Naive thymus-derived CD4-positive, alpha-beta T cell (primary cell): ENCODE measurements at regions of chr9 and their contacts with region 1.

Region 1: DNA sequence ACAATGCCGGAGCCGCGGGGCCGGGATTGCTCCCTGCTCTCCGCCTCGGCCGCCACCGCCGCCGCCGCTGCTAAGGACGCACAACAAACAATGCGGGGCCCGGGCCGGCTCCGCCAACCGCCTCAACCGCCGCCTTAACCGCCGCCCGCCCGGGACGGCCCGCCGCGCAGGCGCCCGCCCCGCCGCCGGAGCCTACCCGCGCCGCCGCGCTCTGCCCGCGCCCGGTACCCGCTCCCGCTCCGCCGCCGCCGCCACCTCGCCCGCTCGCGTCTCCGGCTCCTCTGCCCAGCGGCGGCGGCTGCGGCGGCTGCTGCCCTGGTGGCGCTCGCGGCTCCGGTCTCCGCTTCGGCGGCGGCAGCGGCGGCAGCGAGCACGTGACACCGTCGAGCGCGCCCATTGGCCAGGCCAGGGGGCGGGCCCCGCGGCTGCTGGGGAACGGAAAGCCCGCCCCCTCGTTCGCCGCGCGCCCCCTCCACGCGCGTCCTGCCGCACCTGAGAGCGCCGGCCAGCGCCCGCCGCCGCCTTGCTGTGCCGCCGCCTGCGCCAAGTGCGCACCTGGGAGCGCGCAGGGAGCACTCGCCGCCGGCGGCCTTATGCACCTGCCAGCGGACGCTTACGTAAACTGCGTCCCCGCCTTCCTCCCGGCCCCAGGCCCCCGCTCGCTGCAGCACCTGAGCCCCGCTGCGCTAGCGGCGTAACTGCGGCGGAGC is at the start of gene STRBP:
- DNase-seq: peak; percentile 90 to 98 (median 96)
- ATAC-seq: peak; percentile 96
- H3K4me3 ChIP-seq: peak within 1 kb of the TSS; percentile 76
- H3K4me3 Mint-ChIP-seq: peak within 1 kb of the TSS; percentile 72 to 97 (median 83)
- H3K27ac ChIP-seq: peak within 1 kb of the TSS; percentile 78
- H3K27ac Mint-ChIP-seq: peak within 1 kb of the TSS; percentile 37 to 90 (median 74)
- H3K4me1 ChIP-seq: peaks cover 3 to 12% of the 10 kb centered on the region in 2 donors
- H3K4me1 Mint-ChIP-seq: peaks cover 26 to 45% (median 40%) of the 10 kb centered on the region in 7 donors
- H3K27me3 ChIP-seq: no peaks in the 10 kb centered on the region
- H3K27me3 Mint-ChIP-seq: peaks cover 0 to 9% (median 0%) of the 10 kb centered on the region in 5 donors
- total RNA-seq, gene STRBP: 14.5 to 28.8 (median 17.5) TPM

Region 2: GRCh38 chr9:122264360-122265148 is 1003.8 kb before region 1 on chr9 and contains the starts of genes MRRF and RBM18:
- CTCF ChIA-PET with region 1: no interaction called
- POLR2A ChIA-PET with region 1: no interaction called
- intact Hi-C with region 1: loop called in 1 of 2 experiments (anchors 5 kb)
- DNase-seq: peak; percentile 80 to 93 (median 88)
- ATAC-seq: peak; percentile 92
- H3K4me3 ChIP-seq: peak within 1 kb of the TSS; percentile 93
- H3K4me3 Mint-ChIP-seq: peak within 1 kb of the TSS; percentile 88 to 100 (median 98)
- H3K27ac ChIP-seq: peak within 1 kb of the TSS; percentile 94
- H3K27ac Mint-ChIP-seq: peak within 1 kb of the TSS; percentile 76 to 100 (median 99)
- H3K4me1 ChIP-seq: peaks cover 18 to 25% of the 10 kb centered on the region in 2 donors
- H3K4me1 Mint-ChIP-seq: peaks cover 40 to 71% (median 61%) of the 10 kb centered on the region in 7 donors
- H3K27me3 ChIP-seq: no peaks in the 10 kb centered on the region
- H3K27me3 Mint-ChIP-seq: peaks cover 0 to 2% (median 0%) of the 10 kb centered on the region in 5 donors
- total RNA-seq, gene MRRF: 28.1 to 35.8 (median 33.3) TPM
- total RNA-seq, gene RBM18: 14.2 to 22.9 (median 15.8) TPM

Region 3: DNA sequence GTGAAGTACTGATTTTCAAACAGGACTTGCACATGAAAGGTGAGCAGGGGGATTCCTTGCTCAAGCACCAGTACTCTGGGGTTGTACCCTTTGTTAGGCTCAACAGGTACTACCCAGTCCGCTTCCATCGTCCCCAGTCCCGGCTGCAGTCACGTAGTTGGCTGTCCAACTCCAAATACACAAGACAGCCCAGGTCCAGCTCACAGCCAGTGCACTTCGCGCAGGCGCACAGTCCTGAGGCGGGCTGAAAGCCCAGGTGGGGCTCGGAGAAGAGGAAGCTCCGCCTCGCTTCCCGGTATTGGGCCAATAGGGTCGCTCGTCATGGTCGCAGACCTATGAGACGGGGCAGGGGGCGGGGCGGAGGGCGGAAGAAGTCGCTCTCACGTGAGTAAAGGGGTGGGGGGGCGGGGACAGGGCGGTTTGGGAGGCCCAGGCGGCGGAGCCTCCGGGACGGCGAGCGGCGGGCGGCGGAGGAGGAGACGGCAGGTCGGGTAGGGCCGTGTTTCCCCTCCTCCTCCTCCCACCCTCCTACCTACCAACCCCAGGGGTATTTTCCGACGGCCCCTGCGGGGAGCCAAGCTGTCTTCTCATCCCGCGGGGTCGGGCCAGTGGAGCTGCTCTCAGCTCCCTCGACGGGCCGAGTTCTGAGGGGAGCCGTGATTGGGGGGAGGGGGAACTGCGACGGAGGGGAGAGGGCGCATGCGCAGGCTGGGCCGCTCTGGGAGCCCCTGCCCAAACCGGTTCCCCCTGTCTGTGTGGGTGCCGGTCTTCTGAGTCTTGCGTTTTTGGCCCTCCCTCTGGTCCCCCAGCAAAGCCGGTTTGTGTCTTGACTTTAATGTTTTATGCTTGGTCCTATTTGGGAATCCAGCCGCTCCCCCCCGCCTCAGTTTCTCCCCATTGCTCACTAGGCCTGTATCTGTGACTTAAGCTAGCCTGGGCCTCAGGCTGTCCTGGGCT is 327.5 kb before region 1 on chr9 and contains the start of gene RABGAP1:
- CTCF ChIA-PET with region 1: interaction called, 4 read pairs
- POLR2A ChIA-PET with region 1: interaction called, 3 read pairs
- intact Hi-C with region 1: loop called (anchors 1 to 10 kb)
- DNase-seq: peak; percentile 89 to 98 (median 94)
- ATAC-seq: peak; percentile 99
- H3K4me3 ChIP-seq: peak within 1 kb of the TSS; percentile 84
- H3K4me3 Mint-ChIP-seq: peak within 1 kb of the TSS; percentile 90 to 99 (median 96)
- H3K27ac ChIP-seq: peak within 1 kb of the TSS; percentile 89
- H3K27ac Mint-ChIP-seq: peak within 1 kb of the TSS; percentile 80 to 98 (median 94)
- H3K4me1 ChIP-seq: peaks cover 10 to 12% of the 10 kb centered on the region in 2 donors
- H3K4me1 Mint-ChIP-seq: peaks cover 18 to 47% (median 39%) of the 10 kb centered on the region in 7 donors
- H3K27me3 ChIP-seq: no peaks in the 10 kb centered on the region
- H3K27me3 Mint-ChIP-seq: no peaks in the 10 kb centered on the region
- total RNA-seq, gene RABGAP1: 33.8 to 45.7 (median 45.0) TPM

Region 4: DNA sequence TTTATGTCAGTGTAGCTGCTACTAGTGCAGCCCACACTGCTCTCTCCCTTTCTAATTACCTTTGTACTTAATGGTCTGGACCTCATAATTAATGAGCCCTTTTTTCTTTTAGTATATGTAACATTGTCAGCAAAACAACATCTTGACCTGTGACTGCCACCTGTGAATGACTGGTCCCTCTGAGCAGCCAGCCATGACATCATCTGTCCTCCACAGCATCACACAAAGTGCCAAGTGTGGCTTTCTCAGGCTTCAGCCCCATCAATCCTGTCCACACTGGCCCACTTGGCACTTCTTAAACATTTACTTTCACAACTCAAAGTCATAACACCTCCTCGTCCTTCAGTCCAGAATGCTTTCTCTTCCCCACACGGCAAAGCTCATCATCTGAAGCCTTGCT is 130.2 kb before region 1 on chr9:
- CTCF ChIA-PET with region 1: no interaction called
- POLR2A ChIA-PET with region 1: no interaction called
- intact Hi-C with region 1: no loop called
- DNase-seq: no peak
- ATAC-seq: no peak
- H3K4me3 ChIP-seq: no peak overlapping the region
- H3K4me3 Mint-ChIP-seq: no peak overlapping the region
- H3K27ac ChIP-seq: no peak overlapping the region
- H3K27ac Mint-ChIP-seq: peak overlapping the region in 1 of 9 donors; percentile 11
- H3K4me1 ChIP-seq: no peaks in the 10 kb centered on the region
- H3K4me1 Mint-ChIP-seq: peaks cover 0 to 6% (median 0%) of the 10 kb centered on the region in 7 donors
- H3K27me3 ChIP-seq: no peaks in the 10 kb centered on the region
- H3K27me3 Mint-ChIP-seq: no peaks in the 10 kb centered on the region

Region 5: DNA sequence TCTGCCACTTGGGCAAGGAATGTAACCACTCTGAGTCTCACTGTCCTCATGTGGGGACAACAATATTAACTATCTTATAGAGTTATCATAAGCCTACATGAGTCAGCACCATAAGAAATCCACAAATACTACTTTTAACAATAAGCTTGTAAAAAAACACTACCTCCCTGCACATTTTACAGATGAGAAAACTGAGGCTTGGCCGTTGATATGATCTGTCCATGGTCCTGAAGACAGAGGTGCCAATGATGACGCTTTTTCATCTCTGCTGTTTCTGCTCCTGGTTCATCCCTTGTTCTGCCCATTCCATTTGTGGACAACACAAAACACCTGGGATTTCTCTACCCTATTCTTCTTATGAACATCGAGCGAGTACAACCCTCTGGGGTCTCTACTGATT is 23.3 kb after region 1 on chr9:
- CTCF ChIA-PET with region 1: no interaction called
- POLR2A ChIA-PET with region 1: no interaction called
- intact Hi-C with region 1: no loop called
- DNase-seq: no peak
- ATAC-seq: no peak
- H3K4me3 ChIP-seq: no peak overlapping the region
- H3K4me3 Mint-ChIP-seq: no peak overlapping the region
- H3K27ac ChIP-seq: no peak overlapping the region
- H3K27ac Mint-ChIP-seq: peak overlapping the region in 2 of 9 donors; percentile 63 to 77
- H3K4me1 ChIP-seq: no peaks in the 10 kb centered on the region
- H3K4me1 Mint-ChIP-seq: peaks cover 0 to 11% (median 4%) of the 10 kb centered on the region in 7 donors
- H3K27me3 ChIP-seq: no peaks in the 10 kb centered on the region
- H3K27me3 Mint-ChIP-seq: peaks cover 0 to 9% (median 0%) of the 10 kb centered on the region in 5 donors

Region 6: DNA sequence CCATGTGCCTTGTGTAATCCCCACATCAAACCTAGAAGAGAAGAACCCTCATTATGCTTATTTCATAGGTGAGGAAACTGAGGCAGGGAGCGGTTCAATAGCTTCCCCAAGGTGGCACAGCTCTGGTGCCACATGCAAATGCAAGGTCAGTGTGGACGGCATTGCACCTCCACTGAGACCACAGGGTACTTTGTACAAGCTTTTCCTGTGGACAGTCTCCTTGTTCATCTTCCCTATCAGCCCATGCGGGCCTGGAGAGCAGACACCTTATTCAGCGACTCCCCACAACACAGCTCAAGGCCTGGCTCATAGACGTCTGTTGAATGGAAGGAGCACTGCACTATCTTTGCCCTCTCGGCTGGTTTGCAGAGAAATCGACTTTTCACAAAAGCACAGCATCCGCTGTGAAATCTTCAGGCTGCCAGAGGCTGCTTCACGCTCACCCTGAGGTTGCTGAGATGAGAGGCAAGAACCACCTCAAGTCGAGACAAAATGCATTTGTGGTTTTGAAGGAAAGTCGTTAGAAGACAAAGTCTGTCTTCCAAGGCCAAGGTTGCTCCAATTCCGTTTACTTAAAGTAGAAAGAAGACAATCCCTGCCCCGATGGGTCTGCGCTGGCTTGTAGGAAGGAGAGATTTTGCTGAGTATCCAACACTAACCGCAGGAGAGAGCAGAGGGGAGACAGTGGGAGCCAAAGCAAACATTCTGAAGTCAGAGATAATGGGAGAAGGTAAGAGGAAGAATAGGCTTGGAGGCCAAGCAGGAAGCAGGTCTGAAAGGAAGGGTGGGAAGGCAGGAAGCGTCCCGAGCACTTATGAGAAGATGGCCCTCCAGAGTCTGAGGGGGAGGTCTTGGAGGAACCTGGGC is 34.2 kb after region 1 on chr9:
- CTCF ChIA-PET with region 1: no interaction called
- POLR2A ChIA-PET with region 1: no interaction called
- intact Hi-C with region 1: loop called in 1 of 2 experiments (anchors 1 kb)
- DNase-seq: peak in 7 of 9 donors; percentile 16 to 51 (median 41)
- ATAC-seq: peak; percentile 30
- H3K4me3 ChIP-seq: peak overlapping the region; percentile 21
- H3K4me3 Mint-ChIP-seq: peak overlapping the region; percentile 9 to 78 (median 68)
- H3K27ac ChIP-seq: peak overlapping the region; percentile 55
- H3K27ac Mint-ChIP-seq: peak overlapping the region; percentile 63 to 98 (median 89)
- H3K4me1 ChIP-seq: peaks cover 16 to 35% of the 10 kb centered on the region in 2 donors
- H3K4me1 Mint-ChIP-seq: peaks cover 29 to 72% (median 69%) of the 10 kb centered on the region in 7 donors
- H3K27me3 ChIP-seq: no peaks in the 10 kb centered on the region
- H3K27me3 Mint-ChIP-seq: no peaks in the 10 kb centered on the region

Region 7: GRCh38 chr9:123349691-123350480 is 81.5 kb after region 1 on chr9:
- CTCF ChIA-PET with region 1: interaction called, 7 read pairs
- POLR2A ChIA-PET with region 1: no interaction called
- intact Hi-C with region 1: loop called in 1 of 2 experiments (anchors 1 kb)
- DNase-seq: peak; percentile 33 to 80 (median 65)
- ATAC-seq: peak; percentile 85
- H3K4me3 ChIP-seq: no peak overlapping the region
- H3K4me3 Mint-ChIP-seq: no peak overlapping the region
- H3K27ac ChIP-seq: no peak overlapping the region
- H3K27ac Mint-ChIP-seq: peak overlapping the region in 2 of 9 donors; percentile 34 to 35
- H3K4me1 ChIP-seq: no peaks in the 10 kb centered on the region
- H3K4me1 Mint-ChIP-seq: peaks cover 0 to 5% (median 4%) of the 10 kb centered on the region in 7 donors
- H3K27me3 ChIP-seq: no peaks in the 10 kb centered on the region
- H3K27me3 Mint-ChIP-seq: peaks cover 0 to 9% (median 0%) of the 10 kb centered on the region in 5 donors

Region 8: DNA sequence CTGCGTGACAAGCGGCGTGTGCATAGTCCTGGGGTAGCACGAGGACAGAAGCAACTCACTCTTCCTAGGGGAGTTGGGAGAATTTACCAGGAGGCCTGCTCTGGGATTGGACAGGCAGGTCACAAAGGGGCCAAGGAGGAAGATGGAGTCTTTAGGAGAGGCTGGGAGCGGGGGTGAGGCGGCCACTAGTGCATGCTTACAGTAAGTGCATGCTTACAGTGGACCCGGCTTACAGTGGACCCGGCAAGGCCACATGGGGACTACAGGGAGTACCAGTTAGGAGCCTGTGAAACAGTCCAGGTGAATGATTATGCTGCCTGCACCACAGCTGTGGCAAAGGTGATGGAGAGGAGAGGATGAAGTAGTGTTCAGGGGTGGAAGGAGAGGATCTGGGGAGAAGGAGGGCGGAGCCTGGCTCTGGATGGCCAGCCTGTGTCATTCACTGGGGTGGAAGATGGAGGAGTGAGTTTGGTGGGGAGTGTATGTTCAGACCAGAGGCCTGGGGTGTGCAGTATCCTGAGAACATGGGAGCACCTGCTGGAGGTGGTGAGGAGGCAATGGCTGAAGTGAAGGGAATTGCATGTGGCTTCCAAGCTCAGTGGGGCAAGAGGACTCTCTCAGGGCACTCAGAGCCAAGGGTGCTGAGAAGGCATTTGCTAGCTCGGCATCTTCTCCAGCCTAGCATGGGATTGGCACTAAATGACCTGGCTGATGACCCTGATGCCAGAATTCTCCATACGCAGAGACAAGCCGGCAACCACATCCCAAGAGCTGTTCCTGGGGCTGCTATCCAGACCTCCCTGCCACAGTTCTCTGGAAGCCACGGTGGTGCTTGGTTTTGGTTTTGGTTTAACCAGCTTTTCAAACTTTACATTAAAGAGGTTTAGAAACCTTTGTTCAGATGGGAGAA is 166.5 kb after region 1 on chr9:
- CTCF ChIA-PET with region 1: no interaction called
- POLR2A ChIA-PET with region 1: no interaction called
- intact Hi-C with region 1: no loop called
- DNase-seq: no peak
- ATAC-seq: no peak
- H3K4me3 ChIP-seq: no peak overlapping the region
- H3K4me3 Mint-ChIP-seq: no peak overlapping the region
- H3K27ac ChIP-seq: no peak overlapping the region
- H3K27ac Mint-ChIP-seq: no peak overlapping the region
- H3K4me1 ChIP-seq: no peaks in the 10 kb centered on the region
- H3K4me1 Mint-ChIP-seq: no peaks in the 10 kb centered on the region
- H3K27me3 ChIP-seq: no peaks in the 10 kb centered on the region
- H3K27me3 Mint-ChIP-seq: no peaks in the 10 kb centered on the region

Region 9: GRCh38 chr9:124852829-124853531 is 1584.6 kb after region 1 on chr9 and contains the start of gene WDR38:
- CTCF ChIA-PET with region 1: no interaction called
- POLR2A ChIA-PET with region 1: no interaction called
- intact Hi-C with region 1: loop called in 1 of 2 experiments (anchors 5 kb)
- DNase-seq: peak; percentile 55 to 86 (median 76)
- ATAC-seq: peak; percentile 95
- H3K4me3 ChIP-seq: peak within 1 kb of the TSS; percentile 50
- H3K4me3 Mint-ChIP-seq: peak within 1 kb of the TSS in 9 of 10 donors; percentile 64 to 79 (median 68)
- H3K27ac ChIP-seq: peak within 1 kb of the TSS; percentile 46
- H3K27ac Mint-ChIP-seq: peak within 1 kb of the TSS in 3 of 9 donors; percentile 9 to 23 (median 19)
- H3K4me1 ChIP-seq: peaks cover 8% of the 10 kb centered on the region in 2 donors
- H3K4me1 Mint-ChIP-seq: peaks cover 4 to 14% (median 6%) of the 10 kb centered on the region in 7 donors
- H3K27me3 ChIP-seq: no peaks in the 10 kb centered on the region
- H3K27me3 Mint-ChIP-seq: peaks cover 5 to 16% (median 9%) of the 10 kb centered on the region in 5 donors
- total RNA-seq, gene WDR38: not detected